ENCODE measurements at regions of chr2 and their contacts with region 1.

Region 1: DNA sequence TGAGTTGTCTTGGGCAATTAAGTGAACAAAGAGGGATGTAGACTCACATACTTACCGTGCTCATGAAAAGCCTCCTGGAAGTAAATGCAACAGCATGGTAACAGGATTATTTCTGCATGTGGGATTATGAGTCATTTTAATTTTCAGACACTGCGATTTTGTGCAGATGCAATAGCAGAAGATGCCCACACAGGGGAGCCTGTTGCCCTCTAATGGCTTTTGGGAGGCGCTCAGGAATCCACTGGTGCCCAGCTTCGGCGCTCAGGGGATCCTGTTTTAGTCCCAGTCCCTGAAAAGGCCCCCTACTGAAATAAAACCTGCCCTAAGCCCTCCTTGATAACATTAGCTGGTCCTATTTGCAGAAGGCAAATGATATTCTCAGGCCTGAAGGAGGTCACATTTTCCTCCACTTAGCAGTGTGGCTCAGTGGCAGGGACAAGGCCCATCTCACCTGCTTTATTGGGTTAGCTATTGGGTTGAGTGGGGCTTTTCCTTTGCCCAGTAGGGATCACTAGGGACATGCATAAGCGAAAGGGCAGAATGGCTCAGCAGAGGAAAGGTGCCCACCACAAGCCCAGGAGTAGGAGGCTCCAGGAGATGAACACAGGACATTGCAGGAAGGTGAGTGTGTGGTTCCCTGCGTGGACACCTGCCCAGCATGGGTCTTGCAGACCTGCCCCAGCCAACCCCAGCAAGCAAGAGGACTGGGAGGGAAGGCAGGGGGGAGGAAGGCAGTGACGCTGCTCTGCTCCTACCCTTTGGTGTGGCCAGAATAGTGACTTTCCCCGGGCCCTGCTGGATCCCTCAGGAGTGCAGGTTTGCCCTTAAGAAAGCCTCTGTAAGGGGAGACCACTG is 26.5 kb upstream of the KCNS3 start:
- DNase-seq: peak; percentile 7
- H3K4me3 Mint-ChIP-seq: no peak overlapping the region
- H3K27ac Mint-ChIP-seq: no peak overlapping the region
- H3K4me1 Mint-ChIP-seq: no peaks in the 10 kb centered on the region
- H3K27me3 Mint-ChIP-seq: peaks cover 7% of the 10 kb centered on the region

Region 2: DNA sequence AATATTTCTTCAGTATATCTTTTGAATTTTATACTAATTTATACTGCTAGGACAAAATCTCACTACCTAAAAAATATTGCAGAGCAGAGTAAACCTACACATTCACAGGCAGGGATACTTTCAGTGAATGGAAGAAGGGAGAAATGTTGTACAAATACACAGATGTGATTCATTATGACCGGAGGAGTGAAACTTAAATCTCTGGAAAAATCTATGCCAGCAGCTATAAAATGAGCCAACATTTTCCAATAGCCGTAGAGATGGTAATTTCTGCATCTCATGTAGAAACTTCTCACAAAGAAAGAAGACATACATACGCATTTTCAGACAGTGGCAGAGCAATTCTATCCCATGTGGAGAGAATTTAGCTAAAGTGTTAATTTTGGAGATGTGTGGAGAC is 81.3 kb after region 1 on chr2:
- intact Hi-C with region 1: no loop called
- DNase-seq: no peak
- H3K4me3 Mint-ChIP-seq: no peak overlapping the region
- H3K27ac Mint-ChIP-seq: no peak overlapping the region
- H3K4me1 Mint-ChIP-seq: no peaks in the 10 kb centered on the region
- H3K27me3 Mint-ChIP-seq: no peaks in the 10 kb centered on the region

Region 3: GRCh38 chr2:18149645-18150246 is 297.8 kb after region 1 on chr2:
- intact Hi-C with region 1: loop called (anchors 1 kb)
- DNase-seq: no peak
- H3K4me3 Mint-ChIP-seq: no peak overlapping the region
- H3K27ac Mint-ChIP-seq: no peak overlapping the region
- H3K4me1 Mint-ChIP-seq: no peaks in the 10 kb centered on the region
- H3K27me3 Mint-ChIP-seq: no peaks in the 10 kb centered on the region

Measured in activated T-helper 1 cell treated with anti-CD3 and anti-CD28 coated beads, Interleukin-12 subunit alpha, Interleukin-12 subunit beta, Interleukin-2, Interleukin-4 antibody, amounts not matched to agents 30 ng/mL and 10 ng/mL and 1 ng/mL, durations not matched to agents 14 hours and 24 hours and 36 hours (primary cell).